Right cardiac atrium (tissue), 5 donors: ENCODE measurements at regions of chr6 and their contacts with region 1.

Region 1: DNA sequence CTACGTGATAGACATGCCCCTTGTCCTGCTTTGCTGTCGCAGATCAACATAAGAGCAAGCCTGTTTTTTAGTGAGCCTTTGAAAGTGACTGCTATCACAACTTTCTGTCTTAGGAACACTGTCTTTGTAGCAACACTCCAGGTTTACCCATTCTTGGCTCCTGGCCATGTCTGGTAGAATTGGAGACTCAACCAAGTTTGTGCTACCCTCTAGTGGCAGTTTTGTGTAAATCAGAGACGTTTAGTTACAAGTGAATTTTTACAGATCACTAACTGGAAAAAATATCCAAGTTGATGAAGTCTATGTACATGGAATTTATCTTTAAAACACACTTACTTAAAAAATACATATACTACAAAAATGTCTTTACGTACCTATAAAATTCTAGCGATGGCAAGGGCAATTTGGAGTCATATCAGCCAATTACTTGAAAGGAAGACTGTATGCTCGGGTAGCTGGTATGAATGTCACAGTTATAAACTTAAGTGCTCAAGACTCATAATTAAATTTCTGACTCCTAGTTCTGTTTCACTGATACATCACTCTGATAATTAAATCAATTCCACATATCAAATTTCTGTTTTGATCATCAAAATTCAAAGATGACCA is 101.4 kb downstream of the ADGB start:
- DNase-seq: peak; percentile 31 to 66 (median 59)
- ATAC-seq: peak; percentile 41 to 55
- H3K4me3 ChIP-seq: no peak overlapping the region
- H3K27ac ChIP-seq: no peak overlapping the region
- H3K4me1 ChIP-seq: no peaks in the 10 kb centered on the region
- H3K27me3 ChIP-seq: no peaks in the 10 kb centered on the region

Region 2: DNA sequence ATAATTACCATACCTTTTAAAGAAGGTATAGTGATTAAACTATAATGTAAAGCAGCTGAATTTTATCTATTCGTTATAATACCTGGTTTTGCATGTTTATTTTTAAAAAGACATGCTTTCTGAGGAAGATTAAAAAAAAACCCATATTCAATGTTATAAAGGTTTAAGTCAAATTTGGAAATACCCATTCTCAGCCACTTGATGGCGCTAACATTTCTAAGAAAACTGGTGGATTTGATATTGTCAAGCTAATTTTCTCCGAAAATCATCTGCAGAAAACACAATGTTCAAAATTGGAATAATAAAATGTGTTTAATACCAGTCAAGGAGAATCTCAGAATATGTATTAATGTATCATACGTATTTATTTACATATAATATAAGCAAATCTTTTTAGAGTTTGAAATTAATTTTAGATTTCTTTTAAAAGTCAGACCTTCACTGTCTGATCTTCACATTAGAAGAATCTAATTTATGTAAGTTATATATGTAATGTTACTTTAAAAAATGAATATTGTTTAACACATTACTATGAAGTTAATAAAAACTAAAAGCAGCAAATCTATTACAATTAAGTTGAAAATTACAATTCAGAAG is 771.0 kb before region 1 on chr6:
- intact Hi-C with region 1: loop called in 1 of 4 experiments (anchors 10 kb)
- DNase-seq: no peak
- ATAC-seq: no peak
- H3K4me3 ChIP-seq: no peak overlapping the region
- H3K27ac ChIP-seq: no peak overlapping the region
- H3K4me1 ChIP-seq: no peaks in the 10 kb centered on the region
- H3K27me3 ChIP-seq: no peaks in the 10 kb centered on the region

Region 3: DNA sequence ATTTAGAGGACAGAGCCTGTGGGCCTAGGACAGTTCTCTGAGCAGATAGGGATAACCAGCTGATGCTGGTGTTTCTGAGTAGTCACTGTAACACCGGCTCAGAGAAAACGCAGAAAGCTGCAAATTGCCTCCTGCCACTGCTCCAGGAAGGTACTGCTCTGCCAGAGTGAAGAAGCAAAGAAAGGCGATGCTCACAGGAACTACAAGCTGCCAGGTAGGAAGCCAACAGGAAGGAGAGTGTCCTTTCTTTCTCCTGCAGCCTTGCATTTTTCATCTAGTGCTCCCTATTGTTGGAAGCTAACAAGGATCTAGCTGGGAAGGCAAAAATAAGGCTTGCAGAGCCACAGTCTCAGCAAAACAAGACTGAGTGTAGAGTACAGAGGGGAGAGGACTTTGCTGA is 227.3 kb before region 1 on chr6:
- intact Hi-C with region 1: no loop called
- DNase-seq: no peak
- ATAC-seq: no peak
- H3K4me3 ChIP-seq: no peak overlapping the region
- H3K27ac ChIP-seq: no peak overlapping the region
- H3K4me1 ChIP-seq: no peaks in the 10 kb centered on the region
- H3K27me3 ChIP-seq: no peaks in the 10 kb centered on the region

Region 4: DNA sequence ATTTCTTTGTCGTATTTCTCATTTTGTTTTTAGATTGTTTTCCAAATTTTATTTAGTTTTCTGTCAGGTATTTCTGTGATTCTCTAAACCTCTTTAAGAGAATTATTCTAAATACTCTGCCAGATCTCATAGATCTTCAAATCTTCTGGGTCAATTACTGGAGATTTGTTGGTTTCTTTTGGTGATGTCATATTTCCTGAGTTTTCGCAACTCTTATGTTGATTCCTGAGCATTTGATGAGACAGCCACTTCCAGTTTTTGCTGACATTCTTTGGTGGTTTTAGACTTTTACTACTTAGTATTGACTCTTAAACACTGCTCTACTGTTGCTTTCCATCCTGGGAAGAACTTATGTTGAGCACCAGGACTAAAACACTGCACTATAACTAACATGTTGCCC is 79.5 kb before region 1 on chr6:
- intact Hi-C with region 1: no loop called
- DNase-seq: no peak
- ATAC-seq: no peak
- H3K4me3 ChIP-seq: no peak overlapping the region
- H3K27ac ChIP-seq: no peak overlapping the region
- H3K4me1 ChIP-seq: no peaks in the 10 kb centered on the region
- H3K27me3 ChIP-seq: no peaks in the 10 kb centered on the region

Region 5: DNA sequence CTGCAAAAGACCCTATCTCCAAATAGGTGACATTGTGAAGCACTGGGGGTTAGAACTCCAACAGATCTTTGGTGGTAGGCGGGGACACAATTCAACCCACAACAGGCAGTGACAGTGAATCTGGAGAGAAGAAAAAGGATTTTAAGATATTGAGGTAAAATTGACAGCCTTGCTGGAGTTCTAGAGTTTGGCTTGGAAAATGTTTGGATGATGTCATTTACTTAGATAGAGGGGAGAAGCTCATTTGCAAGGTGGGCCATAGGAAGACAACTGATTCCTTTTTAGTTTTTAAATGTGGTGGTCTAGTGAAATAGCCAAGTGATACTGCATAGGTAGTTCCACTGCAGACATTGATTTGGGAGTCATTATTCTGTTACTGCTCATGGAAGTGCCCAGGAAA is 48.8 kb after region 1 on chr6:
- intact Hi-C with region 1: no loop called
- DNase-seq: no peak
- ATAC-seq: no peak
- H3K4me3 ChIP-seq: no peak overlapping the region
- H3K27ac ChIP-seq: no peak overlapping the region
- H3K4me1 ChIP-seq: no peaks in the 10 kb centered on the region
- H3K27me3 ChIP-seq: no peaks in the 10 kb centered on the region